SK-N-SH (cell line): ENCODE measurements at regions of chr3 and their contacts with region 1.

Region 1: DNA sequence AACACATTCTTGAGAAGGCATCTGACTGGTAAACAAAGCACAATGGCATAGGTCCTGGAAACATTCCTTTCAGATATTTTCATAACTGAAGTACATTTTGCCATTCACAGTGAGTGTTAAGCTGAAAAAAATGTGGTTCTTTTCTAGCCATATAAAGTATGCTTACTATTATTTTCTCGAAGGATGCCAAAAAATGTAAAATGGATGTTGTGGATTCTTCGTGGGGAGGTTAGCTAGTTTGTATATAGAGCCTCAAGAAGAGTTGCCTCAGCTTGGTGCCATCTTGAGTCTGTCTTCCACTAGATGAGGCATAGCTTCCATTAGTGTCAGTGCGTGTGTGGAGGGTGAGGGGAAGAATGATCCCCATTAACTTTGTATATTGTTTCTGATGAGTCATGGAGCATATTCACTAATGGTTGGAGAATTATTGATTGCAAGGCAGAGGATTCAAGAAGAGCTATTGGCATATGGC is 4.1 kb downstream of the MBNL1 start:
- DNase-seq: no peak
- H3K4me3 ChIP-seq: peak overlapping the region in 1 of 2 experiments; percentile 7; a peak in 1 of 4 replicates
- H3K27ac ChIP-seq: peak overlapping the region; percentile 50 to 96; a peak in 3 of 4 replicates
- H3K4me1 ChIP-seq: peaks cover 11 to 14% of the 10 kb centered on the region in 2 experiments; a peak in 3 of 4 replicates
- H3K27me3 ChIP-seq: no peaks in the 10 kb centered on the region
- CTCF ChIP-seq: no peak
- EP300 ChIP-seq: peak in 1 of 2 experiments; percentile 68; a peak in 1 of 4 replicates
- RAD21 ChIP-seq: no peak

Region 2: GRCh38 chr3:152283501-152284376 is 10.9 kb after region 1 on chr3:
- CTCF ChIA-PET with region 1: interaction called, 13 read pairs
- POLR2A ChIA-PET with region 1: interaction called, 3 read pairs
- DNase-seq: no peak
- H3K4me3 ChIP-seq: no peak overlapping the region
- H3K27ac ChIP-seq: peak overlapping the region; percentile 16 to 22; a peak in 3 of 4 replicates
- H3K4me1 ChIP-seq: peaks cover 14 to 18% of the 10 kb centered on the region in 2 experiments; a peak in 3 of 4 replicates
- H3K27me3 ChIP-seq: no peaks in the 10 kb centered on the region
- CTCF ChIP-seq: no peak
- EP300 ChIP-seq: no peak
- RAD21 ChIP-seq: no peak